Posterior cingulate gyrus (tissue), 11 donors: ENCODE measurements at regions of chr11 and their contacts with region 1.

Region 1: DNA sequence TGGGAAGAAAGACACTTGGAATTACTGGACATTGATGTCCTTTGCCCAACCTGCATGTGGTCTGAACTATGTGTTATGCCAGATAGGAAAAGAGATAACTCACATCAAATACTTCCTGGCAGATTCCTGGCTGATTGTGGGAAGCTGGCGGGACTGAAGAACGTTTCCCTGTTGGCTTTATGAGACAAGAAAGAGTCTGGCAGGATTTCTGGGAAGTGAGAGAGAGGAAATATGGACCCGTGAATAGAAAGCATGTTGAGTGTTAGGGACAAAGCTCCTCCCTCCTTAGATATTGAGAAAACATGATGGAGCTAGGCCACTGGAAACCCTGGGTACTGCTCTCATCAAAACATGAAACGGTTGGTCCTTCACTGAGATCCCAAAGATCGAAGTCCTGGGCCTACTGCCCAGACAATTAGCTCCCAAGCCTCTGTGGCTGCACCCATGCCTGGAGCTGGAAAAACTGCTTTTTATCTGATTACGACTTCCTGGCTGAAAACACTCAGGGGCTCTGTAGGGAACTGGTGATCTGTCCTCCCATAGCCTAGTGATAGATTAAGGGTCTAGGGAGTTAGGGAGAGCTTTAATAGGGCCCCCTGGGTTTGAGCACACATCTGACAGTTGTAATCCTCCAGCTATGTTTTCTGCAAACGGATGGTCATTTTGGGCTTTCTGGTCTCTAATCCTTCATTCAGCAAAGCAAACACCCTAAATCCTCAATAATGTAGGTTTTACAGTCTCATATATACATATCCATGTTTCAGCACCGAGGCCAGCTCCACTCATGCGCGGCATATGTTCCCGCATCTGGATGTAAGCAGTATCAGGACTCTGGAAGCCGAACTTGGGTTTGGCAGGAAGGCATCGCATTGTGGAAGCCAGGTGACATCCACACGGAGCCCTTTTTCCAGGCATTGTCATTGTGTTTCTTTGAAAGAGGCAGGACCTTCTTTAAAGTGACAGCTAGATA is 6.1 kb upstream of the B3GAT1 start:
- DNase-seq: peak in 3 of 10 donors; percentile 73 to 87 (median 83)

Region 2: DNA sequence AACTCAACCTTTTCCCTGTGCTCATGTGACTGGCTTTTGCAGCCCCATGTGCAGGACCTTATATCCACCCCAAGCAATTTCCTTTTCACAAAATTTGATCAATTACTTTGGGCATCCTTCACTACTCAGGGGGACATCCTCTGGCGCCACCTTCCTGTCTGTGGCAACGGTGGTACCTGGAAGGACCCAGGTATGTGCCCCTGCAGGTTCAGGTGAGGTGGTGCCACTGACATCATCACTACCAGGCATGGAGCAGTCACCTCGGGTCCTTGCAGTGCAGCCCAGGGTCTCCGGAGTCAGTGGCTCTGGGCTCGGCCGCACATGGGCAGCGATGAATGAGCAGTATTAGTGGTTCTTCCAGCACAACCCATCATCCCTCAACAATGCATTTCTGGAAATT is 31.6 kb after region 1 on chr11:
- intact Hi-C with region 1: loop called (anchors 5 kb)
- DNase-seq: peak in 1 of 10 donors; percentile 53

Region 3: DNA sequence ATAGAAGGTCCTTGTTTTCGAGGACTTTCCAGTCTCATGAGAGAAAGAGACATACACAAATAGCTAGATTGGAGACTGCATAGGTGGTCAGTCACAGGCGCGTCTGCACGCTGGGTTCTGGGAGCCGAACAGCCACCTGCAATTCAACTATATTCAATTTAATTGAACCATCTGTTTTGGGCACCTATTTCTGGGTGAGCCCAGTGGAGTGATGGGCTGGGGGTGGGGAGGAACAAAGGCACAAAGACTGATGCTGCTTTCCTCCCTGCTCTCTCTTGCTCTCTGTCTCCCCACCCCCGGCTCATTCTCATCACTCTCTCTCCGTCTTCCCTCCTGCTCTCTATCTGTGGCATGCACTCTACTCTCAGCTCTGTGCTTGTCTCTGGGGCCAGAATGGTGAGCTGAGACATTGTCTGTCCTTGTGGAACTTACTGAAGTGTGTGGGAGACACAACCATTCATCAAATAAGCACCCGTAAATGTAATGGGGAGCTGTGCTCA is 42.0 kb after region 1 on chr11:
- intact Hi-C with region 1: no loop called
- DNase-seq: peak in 3 of 10 donors; percentile 14 to 74 (median 74)